Transverse colon (tissue), 4 donors: ENCODE measurements at regions of chr11 and their contacts with region 1.

Region 1: GRCh38 chr11:67382276-67383136 is 9.1 kb upstream of the CLCF1 start:
- DNase-seq: peak; percentile 89
- H3K4me3 ChIP-seq: no peak overlapping the region
- H3K27ac ChIP-seq: no peak overlapping the region
- H3K4me1 ChIP-seq: peaks cover 4 to 12% (median 11%) of the 10 kb centered on the region in 4 donors
- H3K27me3 ChIP-seq: no peaks in the 10 kb centered on the region
- CTCF ChIP-seq: peak; percentile 96 to 98 (median 96)
- EP300 ChIP-seq: no peak
- POLR2A ChIP-seq: no peak

Region 2: GRCh38 chr11:67265633-67266423 is 116.7 kb before region 1 on chr11:
- in situ Hi-C with region 1: loop called in 2 of 4 experiments (anchors 5 to 25 kb)
- intact Hi-C with region 1: no loop called
- DNase-seq: peak; percentile 85
- H3K4me3 ChIP-seq: no peak overlapping the region
- H3K27ac ChIP-seq: peak overlapping the region; percentile 68 to 78 (median 74)
- H3K4me1 ChIP-seq: peaks cover 45 to 70% (median 63%) of the 10 kb centered on the region in 4 donors
- H3K27me3 ChIP-seq: no peaks in the 10 kb centered on the region
- CTCF ChIP-seq: peak; percentile 67 to 86 (median 72)
- EP300 ChIP-seq: no peak
- POLR2A ChIP-seq: no peak

Region 3: DNA sequence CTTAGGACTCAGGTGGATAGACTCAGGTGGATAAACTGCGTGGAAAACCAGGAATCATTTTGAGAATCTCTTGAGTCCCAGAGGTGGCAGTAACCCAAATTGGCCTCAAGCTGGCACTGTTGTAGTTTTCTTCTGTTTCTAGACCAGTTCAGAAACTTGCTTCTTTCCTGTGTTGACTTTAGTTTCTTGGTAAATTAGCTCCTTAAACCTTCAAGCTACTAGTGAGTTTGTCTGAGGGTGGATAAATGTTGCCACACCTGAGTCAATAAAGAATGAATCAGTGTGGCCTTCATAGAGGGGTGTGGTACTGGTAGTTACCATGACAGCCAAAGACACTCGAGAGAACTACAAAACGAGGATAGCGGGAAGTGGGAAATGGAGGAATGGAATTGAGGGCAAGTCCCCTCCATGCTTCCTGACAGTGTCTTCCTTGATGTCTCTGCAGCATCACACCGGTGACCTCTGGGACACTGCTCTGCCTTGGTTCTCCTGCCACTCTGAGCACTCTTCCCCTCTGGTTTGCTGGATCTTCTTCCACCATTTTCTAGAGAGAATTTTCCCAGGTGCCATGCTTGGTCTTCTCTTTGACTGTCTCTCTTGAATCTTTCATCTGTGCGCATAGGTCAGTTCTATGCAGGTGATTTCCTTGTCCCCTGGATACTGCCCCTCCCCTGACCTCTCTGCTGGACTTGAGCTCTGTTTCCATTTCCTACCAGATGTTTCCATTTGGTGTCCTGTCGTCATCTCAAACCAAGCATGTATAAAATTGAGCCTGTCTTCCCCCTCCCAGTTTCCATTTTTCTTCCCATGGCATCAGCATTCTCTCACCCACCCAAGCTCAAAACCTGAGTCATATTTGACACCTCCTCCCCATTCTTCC is 36.3 kb before region 1 on chr11:
- in situ Hi-C with region 1: no loop called
- intact Hi-C with region 1: loop called (anchors 5 kb)
- DNase-seq: peak; percentile 66
- H3K4me3 ChIP-seq: no peak overlapping the region
- H3K27ac ChIP-seq: peak overlapping the region; percentile 82 to 84 (median 84)
- H3K4me1 ChIP-seq: peaks cover 22 to 54% (median 25%) of the 10 kb centered on the region in 4 donors
- H3K27me3 ChIP-seq: no peaks in the 10 kb centered on the region
- CTCF ChIP-seq: peak; percentile 47 to 95 (median 70)
- EP300 ChIP-seq: peak; percentile 93
- POLR2A ChIP-seq: no peak

Region 4: DNA sequence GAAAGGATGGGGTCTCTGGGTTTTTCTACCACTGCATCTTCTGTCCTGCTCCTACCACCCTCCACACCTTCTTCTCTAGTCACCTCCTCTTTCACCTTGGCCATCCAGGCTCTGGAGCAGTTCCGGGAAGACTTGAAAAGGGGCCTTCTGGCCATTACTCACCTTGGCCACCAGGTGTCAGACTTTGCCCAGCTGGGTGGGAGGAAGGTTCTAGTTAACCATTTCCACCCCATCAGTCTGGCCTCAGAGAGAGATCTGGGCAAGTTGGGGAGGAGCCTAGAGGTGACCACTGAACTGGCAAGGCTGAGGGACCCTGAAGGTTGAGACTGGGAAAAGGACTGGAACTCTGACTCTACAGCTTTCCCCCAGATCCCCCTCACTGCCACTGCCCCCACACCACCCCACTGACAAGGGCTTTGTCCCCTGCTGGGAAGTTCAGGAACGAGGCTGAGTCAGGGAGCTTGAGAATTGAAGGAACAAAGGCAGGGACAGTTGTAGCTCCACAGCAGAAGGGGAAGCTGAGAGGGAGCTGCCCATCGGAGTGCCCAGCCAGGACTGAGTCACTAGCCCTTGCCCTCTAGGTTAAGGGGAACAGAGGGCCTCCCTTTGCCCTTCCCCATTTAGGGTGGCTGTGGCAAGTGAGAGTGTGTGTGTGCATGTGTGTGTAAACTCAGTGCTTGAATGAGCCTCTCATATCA is 25.5 kb before region 1 on chr11:
- in situ Hi-C with region 1: no loop called
- intact Hi-C with region 1: loop called (anchors 1 kb)
- DNase-seq: peak; percentile 81
- H3K4me3 ChIP-seq: peak overlapping the region in 2 of 4 donors; percentile 11 to 19
- H3K27ac ChIP-seq: peak overlapping the region; percentile 96 to 100 (median 99)
- H3K4me1 ChIP-seq: peaks cover 41 to 54% (median 47%) of the 10 kb centered on the region in 4 donors
- H3K27me3 ChIP-seq: no peaks in the 10 kb centered on the region
- CTCF ChIP-seq: peak; percentile 93 to 99 (median 97)
- EP300 ChIP-seq: no peak
- POLR2A ChIP-seq: peak; percentile 77

Region 5: GRCh38 chr11:67507864-67508485 is 125.5 kb after region 1 on chr11 and contains the start of gene CDK2AP2:
- in situ Hi-C with region 1: no loop called
- intact Hi-C with region 1: no loop called
- DNase-seq: peak; percentile 100
- H3K4me3 ChIP-seq: peak within 1 kb of the TSS; percentile 65 to 83 (median 78)
- H3K27ac ChIP-seq: peak within 1 kb of the TSS; percentile 98 to 100 (median 98)
- H3K4me1 ChIP-seq: peaks cover 26 to 51% (median 39%) of the 10 kb centered on the region in 4 donors
- H3K27me3 ChIP-seq: no peaks in the 10 kb centered on the region
- CTCF ChIP-seq: no peak
- EP300 ChIP-seq: no peak
- POLR2A ChIP-seq: peak; percentile 89
- total RNA-seq, gene CDK2AP2: 49.4 to 140 (median 83.4) TPM

Region 6: GRCh38 chr11:67606492-67607201 is 224.1 kb after region 1 on chr11 and contains the start of gene NDUFV1:
- in situ Hi-C with region 1: no loop called
- intact Hi-C with region 1: no loop called
- DNase-seq: peak; percentile 98
- H3K4me3 ChIP-seq: peak within 1 kb of the TSS; percentile 81 to 99 (median 94)
- H3K27ac ChIP-seq: peak within 1 kb of the TSS; percentile 85 to 93 (median 90)
- H3K4me1 ChIP-seq: peaks cover 7 to 20% (median 17%) of the 10 kb centered on the region in 4 donors
- H3K27me3 ChIP-seq: no peaks in the 10 kb centered on the region
- CTCF ChIP-seq: peak; percentile 56 to 93 (median 81)
- EP300 ChIP-seq: no peak
- POLR2A ChIP-seq: peak; percentile 90
- total RNA-seq, gene NDUFV1: 421 to 762 (median 554) TPM